PC-9 (cell line): ENCODE measurements at regions of chr16 and their contacts with region 1.

Region 1: GRCh38 chr16:30407102-30407803 is at the start of gene ZNF771:
- DNase-seq: peak; percentile 72 to 96
- H3K4me3 ChIP-seq: peak within 1 kb of the TSS; percentile 86
- H3K27ac ChIP-seq: peak within 1 kb of the TSS; percentile 37; the same call in 1 of the 2 replicates
- H3K4me1 ChIP-seq: peaks cover 19% of the 10 kb centered on the region
- H3K27me3 ChIP-seq: no peaks in the 10 kb centered on the region
- CTCF ChIP-seq: no peak
- total RNA-seq, gene ZNF771: 19.0 and 21.9 TPM in 2 replicates

Region 2: DNA sequence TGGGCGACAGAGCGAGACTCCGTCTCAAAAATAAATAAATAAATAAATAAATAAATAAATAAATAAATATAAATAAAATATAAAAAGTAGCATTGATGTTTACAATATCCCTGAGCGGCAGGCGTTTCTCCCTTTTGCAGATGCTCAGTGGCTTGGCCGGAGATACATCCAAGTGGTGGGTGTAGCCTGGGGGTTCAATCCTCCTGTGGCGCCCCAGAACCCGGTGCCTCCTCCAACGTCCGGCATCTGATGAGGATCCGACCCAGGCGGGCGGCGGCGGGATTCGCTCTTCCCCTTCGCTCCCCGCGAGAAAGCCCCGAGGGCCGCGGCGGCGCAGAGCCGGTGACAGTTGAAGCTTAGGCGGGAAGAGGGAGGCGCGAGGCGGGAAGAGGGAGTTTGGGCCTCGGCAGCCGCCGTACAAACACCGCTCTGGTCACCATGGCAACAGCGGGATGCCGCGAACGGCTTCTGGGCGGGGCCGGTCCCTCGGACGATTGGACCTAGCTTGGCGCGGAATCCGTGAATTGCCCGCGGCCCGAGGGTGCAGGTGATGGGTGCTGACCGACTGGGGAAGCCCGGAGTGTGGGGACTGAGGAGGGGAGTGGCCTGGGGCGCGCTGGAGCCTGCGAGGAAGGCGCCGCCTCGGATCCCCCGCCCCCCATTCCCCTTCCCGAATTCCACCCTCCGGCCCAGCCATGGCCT is 354.4 kb before region 1 on chr16:
- CTCF ChIA-PET with region 1: no interaction called
- POLR2A ChIA-PET with region 1: interaction called, 3 read pairs
- intact Hi-C with region 1: loop called (anchors 5 kb)
- DNase-seq: peak; percentile 83 to 98
- H3K4me3 ChIP-seq: peak overlapping the region; percentile 66
- H3K27ac ChIP-seq: peak overlapping the region; percentile 28
- H3K4me1 ChIP-seq: peaks cover 20% of the 10 kb centered on the region
- H3K27me3 ChIP-seq: no peaks in the 10 kb centered on the region
- CTCF ChIP-seq: no peak

Region 3: DNA sequence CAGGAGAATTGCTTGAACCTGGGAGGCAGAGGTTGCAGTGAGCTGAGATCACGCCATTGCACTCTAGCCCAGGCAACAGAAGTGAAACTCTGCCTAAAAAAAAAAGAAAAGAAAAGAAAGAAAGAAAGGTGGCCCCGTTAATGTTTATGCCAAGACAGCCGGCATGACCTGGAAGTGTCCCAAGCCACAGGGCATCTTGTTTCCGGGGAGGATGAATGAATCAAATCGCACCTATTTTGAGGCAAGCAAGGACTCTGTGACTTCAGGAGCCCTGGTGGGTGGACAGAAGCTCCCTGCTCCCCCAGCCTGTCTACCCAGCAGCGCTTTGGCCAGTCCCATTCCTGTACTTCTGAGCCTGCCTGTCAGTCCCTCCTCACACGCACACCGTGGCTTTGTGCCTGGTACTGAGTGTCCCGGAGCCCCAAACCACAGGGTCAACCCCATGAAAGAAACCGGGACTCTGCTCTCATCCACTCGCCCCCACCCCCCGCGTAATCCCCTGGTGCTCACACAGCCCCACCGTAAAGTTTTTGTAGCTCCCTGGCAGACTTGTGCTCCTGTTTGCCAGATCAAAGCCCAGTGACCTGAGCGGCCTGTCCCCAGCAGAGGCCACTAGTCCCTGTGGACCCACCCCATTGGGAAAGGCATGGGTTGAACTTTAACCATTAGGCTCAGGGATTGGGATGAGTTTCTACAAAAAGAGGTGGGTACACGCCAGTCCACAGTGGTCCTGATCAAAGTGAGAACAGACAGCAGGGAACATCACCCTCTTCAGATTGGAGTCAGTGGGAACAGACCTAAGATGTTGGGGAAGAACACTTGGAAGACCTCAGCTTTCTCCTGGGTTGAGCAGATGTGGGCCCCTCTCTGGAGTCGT is 71.4 kb before region 1 on chr16:
- CTCF ChIA-PET with region 1: interaction called, 8 read pairs
- POLR2A ChIA-PET with region 1: no interaction called
- intact Hi-C with region 1: loop called (anchors 2 kb)
- DNase-seq: peak in 1 of 2 experiments; percentile 66
- H3K4me3 ChIP-seq: peak overlapping the region; percentile 59
- H3K27ac ChIP-seq: peak overlapping the region; percentile 76
- H3K4me1 ChIP-seq: peaks cover 13% of the 10 kb centered on the region
- H3K27me3 ChIP-seq: no peaks in the 10 kb centered on the region
- CTCF ChIP-seq: no peak

Region 4: DNA sequence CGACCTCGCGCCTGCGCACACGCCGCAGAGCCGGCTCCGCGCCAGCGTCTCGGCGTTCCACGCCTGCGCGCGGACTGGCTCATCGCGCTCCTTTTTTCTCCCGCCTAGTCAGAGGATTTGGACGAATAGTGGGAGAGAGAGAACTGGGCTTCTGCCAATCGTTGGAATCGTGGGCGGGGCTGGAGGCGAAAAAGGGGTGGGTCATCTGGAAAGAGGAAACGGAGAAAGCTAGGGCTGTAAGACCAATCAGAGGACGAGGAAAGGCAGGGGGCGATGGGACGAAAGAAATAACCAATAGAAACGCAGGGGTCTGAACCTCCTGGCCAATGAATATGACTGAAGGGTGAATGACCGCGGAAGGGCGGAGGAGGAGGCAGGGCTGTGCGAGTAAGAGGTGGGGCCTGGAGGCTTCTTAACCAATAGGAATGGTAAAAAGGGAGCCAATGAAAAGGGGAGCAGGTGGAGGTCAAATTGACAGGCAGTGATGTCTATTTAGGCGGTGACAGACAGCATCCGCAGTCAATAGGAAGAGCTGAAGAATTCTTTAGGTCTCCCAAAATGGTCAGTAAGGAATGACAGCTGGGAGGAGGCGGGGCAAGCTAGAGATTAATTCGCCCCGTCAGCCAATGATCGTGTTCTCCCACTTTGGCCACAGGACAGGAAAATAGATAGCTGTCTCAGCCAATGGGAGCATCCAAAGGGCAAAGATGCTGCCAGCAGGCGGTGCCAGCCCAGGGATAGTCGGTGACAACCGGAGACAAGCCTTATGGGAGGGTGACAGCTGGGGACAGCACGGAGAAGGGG is 36.6 kb before region 1 on chr16 and contains the start of gene TBC1D10B:
- CTCF ChIA-PET with region 1: interaction called, 5 read pairs
- POLR2A ChIA-PET with region 1: interaction called, 11 read pairs
- intact Hi-C with region 1: no loop called
- DNase-seq: peak; percentile 100
- H3K4me3 ChIP-seq: peak within 1 kb of the TSS; percentile 75
- H3K27ac ChIP-seq: no peak within 1 kb of the TSS
- H3K4me1 ChIP-seq: peaks cover 22% of the 10 kb centered on the region
- H3K27me3 ChIP-seq: no peaks in the 10 kb centered on the region
- CTCF ChIP-seq: no peak; the same call in 1 of the 2 replicates
- total RNA-seq, gene TBC1D10B: 85.0 and 90.8 TPM in 2 replicates

Region 5: GRCh38 chr16:30395155-30395991 is 11.9 kb before region 1 on chr16 and contains the start of gene ZNF48:
- CTCF ChIA-PET with region 1: interaction called, 5 read pairs
- POLR2A ChIA-PET with region 1: interaction called, 13 read pairs
- intact Hi-C with region 1: no loop called
- DNase-seq: peak; percentile 72 to 93
- H3K4me3 ChIP-seq: peak within 1 kb of the TSS; percentile 98
- H3K27ac ChIP-seq: peak within 1 kb of the TSS; percentile 68
- H3K4me1 ChIP-seq: peaks cover 19% of the 10 kb centered on the region
- H3K27me3 ChIP-seq: no peaks in the 10 kb centered on the region
- CTCF ChIP-seq: no peak; the same call in 1 of the 2 replicates
- total RNA-seq, gene ZNF48: 20.1 and 25.9 TPM in 2 replicates

Region 6: DNA sequence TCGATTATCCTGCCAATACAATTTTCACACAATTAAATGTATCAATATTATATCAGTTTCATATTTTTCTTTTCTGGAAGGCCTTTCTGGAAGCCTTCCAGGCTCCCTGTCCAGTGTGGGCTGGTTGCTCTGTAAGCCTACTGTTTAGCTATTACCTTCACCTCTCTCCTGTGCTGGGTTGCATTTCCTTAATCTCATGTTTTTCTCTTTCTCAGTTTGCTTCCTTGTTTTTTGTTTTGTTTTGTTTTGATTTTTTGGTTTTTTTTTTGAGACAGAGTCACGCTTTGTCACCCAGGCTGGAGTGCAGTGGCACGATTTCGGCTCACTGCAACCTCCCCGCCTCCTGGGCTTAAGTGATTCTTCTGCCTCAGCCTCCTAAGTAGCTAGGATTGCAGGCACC is 31.6 kb after region 1 on chr16:
- CTCF ChIA-PET with region 1: no interaction called
- POLR2A ChIA-PET with region 1: interaction called, 11 read pairs
- intact Hi-C with region 1: no loop called
- DNase-seq: no peak
- H3K4me3 ChIP-seq: no peak overlapping the region
- H3K27ac ChIP-seq: no peak overlapping the region
- H3K4me1 ChIP-seq: peaks cover 9% of the 10 kb centered on the region; the same call in 1 of the 2 replicates
- H3K27me3 ChIP-seq: no peaks in the 10 kb centered on the region
- CTCF ChIP-seq: no peak